ENCODE measurements at regions of chr12 and their contacts with region 1.

Region 1: GRCh38 chr12:56763753-56764657 is 881 bp downstream of the HSD17B6 start:
- DNase-seq: peak; percentile 33
- ATAC-seq: peak; percentile 15; the same call in 1 of the 2 replicates
- H3K4me3 ChIP-seq: no peak overlapping the region
- H3K27ac ChIP-seq: no peak overlapping the region
- H3K4me1 ChIP-seq: peaks cover 5% of the 10 kb centered on the region
- H3K27me3 ChIP-seq: no peaks in the 10 kb centered on the region
- CTCF ChIP-seq: no peak

Region 2: GRCh38 chr12:56922031-56922430 is 158.0 kb after region 1 on chr12:
- CTCF ChIA-PET with region 1: interaction called, 10 read pairs
- POLR2A ChIA-PET with region 1: no interaction called
- intact Hi-C with region 1: no loop called
- DNase-seq: no peak
- ATAC-seq: no peak
- H3K4me3 ChIP-seq: no peak overlapping the region
- H3K27ac ChIP-seq: no peak overlapping the region
- H3K4me1 ChIP-seq: no peaks in the 10 kb centered on the region
- H3K27me3 ChIP-seq: no peaks in the 10 kb centered on the region
- CTCF ChIP-seq: no peak

Region 3: DNA sequence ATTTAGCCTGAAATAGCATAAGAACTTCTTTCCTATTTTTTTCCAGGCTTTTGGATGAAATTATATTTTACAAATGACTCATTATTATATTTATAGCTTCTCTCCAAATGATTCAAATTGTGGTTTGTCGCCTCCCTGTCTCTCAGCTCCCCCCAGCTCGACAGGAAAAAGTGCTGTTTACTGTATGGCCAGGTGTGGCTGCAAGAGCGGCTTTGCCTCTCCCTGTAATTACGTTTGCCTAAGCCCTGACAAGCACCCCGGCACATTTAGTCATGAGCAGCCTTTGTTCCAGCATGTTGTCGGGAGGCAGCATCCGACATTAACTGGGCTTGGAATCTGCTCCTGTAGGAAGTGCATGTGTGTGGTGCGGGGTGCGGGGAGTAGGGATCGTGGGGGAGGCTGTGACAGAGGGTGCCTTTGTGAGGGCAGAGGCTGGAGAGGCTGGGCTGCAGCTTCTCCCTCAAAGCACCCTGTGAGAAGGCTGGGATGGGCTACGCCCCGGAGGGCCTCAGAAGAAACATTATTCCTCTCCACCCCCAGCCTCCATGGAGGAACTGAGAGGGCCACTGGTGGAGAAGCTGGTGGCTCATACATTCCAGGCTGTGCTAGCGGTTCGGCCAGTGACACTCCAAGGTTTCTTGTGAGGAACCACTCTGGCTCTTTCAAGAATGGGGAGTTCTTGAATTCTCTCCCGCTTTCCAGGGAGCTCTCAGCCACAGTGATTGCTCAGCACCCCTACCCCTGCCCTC is 1124.6 kb after region 1 on chr12:
- CTCF ChIA-PET with region 1: no interaction called
- POLR2A ChIA-PET with region 1: no interaction called
- intact Hi-C with region 1: no loop called
- DNase-seq: peak; percentile 82
- ATAC-seq: peak; percentile 90
- H3K4me3 ChIP-seq: peak overlapping the region; percentile 56
- H3K27ac ChIP-seq: peak overlapping the region; percentile 74
- H3K4me1 ChIP-seq: peaks cover 38% of the 10 kb centered on the region
- H3K27me3 ChIP-seq: no peaks in the 10 kb centered on the region
- CTCF ChIP-seq: no peak

Measured in PC-3 (cell line).